Activated CD8-positive, alpha-beta memory T cell treated with anti-CD3 and anti-CD28 coated beads, Interleukin-2, amount 10 ng/mL, durations not matched to agents 7 days and 5 days (primary cell): ENCODE measurements at regions of chr10 and their contacts with region 1.

Region 1: GRCh38 chr10:100743626-100744135 is 1.7 kb upstream of the PAX2 start:
- DNase-seq: peak; percentile 65
- ATAC-seq: peak; percentile 78
- H3K4me3 Mint-ChIP-seq: no peak overlapping the region
- H3K27ac Mint-ChIP-seq: peak overlapping the region; percentile 24
- H3K4me1 Mint-ChIP-seq: peaks cover 19% of the 10 kb centered on the region
- H3K27me3 Mint-ChIP-seq: peaks cover 88% of the 10 kb centered on the region

Region 2: GRCh38 chr10:100670828-100671479 is 72.7 kb before region 1 on chr10:
- CTCF ChIA-PET with region 1: interaction called, 22 read pairs
- DNase-seq: peak; percentile 64
- ATAC-seq: peak; percentile 97
- H3K4me3 Mint-ChIP-seq: no peak overlapping the region
- H3K27ac Mint-ChIP-seq: no peak overlapping the region
- H3K4me1 Mint-ChIP-seq: peaks cover 5% of the 10 kb centered on the region
- H3K27me3 Mint-ChIP-seq: peaks cover 68% of the 10 kb centered on the region

Region 3: DNA sequence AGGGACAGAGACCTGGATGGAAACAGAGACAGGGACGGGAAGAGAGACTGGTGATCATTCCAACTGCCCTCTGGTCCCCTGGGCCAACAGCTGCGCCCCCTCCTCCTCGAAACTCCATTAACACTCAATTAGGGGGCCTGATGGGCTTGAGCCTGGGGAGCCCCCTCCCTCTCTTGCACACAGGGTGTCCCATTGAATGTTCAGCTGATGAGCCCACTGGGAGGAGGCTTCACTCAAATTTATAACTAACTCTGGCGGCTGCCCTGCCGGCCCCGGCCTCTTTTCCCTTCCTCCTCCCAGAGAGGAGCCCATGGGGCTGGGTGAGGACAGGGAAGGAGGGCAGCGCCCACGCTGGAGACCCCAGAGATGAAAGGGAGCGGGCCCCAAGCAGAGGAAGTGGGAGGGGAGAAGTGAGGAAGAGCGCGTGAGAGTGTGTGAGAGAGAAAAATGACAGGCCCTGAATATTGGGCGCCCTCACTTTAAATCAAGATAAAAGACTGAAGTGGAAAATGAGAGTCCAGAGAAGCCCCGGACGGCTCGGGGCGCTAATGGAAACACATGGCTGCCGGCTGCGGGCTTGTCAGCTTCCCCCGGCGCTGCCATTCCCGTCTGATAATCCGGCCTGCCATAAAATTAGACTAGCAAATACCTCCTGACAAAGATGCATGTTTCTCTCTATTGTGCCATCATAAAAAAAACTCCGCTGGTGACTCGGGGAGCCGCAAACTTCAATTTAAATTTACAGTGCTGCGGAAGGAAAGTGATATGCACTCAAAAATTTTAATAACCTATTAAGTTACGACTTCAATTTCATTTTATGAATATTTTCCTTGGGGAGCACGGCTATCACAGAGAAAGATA is 56.3 kb before region 1 on chr10:
- CTCF ChIA-PET with region 1: no interaction called
- DNase-seq: no peak
- ATAC-seq: no peak
- H3K4me3 Mint-ChIP-seq: no peak overlapping the region
- H3K27ac Mint-ChIP-seq: no peak overlapping the region
- H3K4me1 Mint-ChIP-seq: no peaks in the 10 kb centered on the region
- H3K27me3 Mint-ChIP-seq: peaks cover 83% of the 10 kb centered on the region

Region 4: DNA sequence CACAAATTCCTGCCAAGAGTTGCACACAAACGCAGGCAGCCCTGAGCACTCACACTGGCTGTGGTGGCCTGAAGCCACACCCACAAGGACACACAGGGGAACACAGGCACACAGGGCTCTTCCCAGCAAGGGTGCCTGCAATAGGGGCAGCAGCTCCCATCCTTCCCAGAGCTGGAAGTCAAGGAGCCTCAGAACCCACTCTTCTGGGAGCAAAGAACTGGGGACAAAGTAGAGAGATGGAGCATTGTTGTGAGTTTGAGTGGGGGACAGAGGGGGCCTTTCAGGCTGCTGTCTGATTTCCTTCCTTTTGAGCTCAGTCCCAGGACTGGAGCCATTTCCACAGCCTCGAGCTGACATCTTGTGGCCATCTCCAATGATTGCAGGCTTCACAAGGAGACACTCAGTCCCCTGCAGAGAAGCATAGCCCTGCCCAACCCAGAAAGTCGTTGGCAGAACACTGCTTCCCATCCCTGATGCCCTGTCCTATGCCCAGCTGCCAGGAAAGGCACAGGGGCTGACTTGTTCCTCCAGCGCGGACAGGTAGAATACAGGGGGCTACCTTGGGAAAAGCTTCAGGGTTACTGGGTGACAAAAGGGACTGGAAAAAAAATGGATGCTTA is 134.7 kb after region 1 on chr10:
- CTCF ChIA-PET with region 1: interaction called, 12 read pairs
- DNase-seq: peak; percentile 53
- ATAC-seq: peak; percentile 74
- H3K4me3 Mint-ChIP-seq: no peak overlapping the region
- H3K27ac Mint-ChIP-seq: no peak overlapping the region
- H3K4me1 Mint-ChIP-seq: no peaks in the 10 kb centered on the region
- H3K27me3 Mint-ChIP-seq: no peaks in the 10 kb centered on the region

Region 5: DNA sequence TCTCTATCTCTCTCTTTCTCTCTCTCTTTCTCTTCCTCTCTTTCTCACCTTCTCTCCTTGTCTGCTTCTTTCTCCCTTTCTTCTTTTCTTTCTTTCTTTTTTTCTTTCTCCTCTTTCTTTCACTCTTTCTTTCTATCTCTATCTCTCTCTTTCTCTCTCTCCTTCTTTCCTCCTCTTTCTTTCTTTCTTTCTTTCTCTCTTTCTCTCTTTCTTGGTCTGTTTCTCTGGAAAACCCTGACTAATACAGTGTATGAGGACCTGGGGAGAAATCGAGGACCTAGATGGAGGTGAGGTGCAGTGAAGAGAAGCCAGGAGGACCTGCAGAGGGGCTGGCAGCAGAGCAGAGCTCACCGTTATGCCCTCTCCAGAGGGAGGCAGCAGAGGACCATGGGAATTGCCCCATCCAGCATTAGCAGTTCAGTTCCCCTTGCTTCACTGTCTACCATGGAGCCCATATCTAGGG is 557.6 kb after region 1 on chr10:
- CTCF ChIA-PET with region 1: no interaction called
- DNase-seq: peak; percentile 65
- ATAC-seq: peak; percentile 65
- H3K4me3 Mint-ChIP-seq: no peak overlapping the region
- H3K27ac Mint-ChIP-seq: no peak overlapping the region
- H3K4me1 Mint-ChIP-seq: no peaks in the 10 kb centered on the region
- H3K27me3 Mint-ChIP-seq: peaks cover 45% of the 10 kb centered on the region